GM13976 (cell line): ENCODE measurements at regions of chr17 and their contacts with region 1.

Region 1: GRCh38 chr17:42527273-42527703 is 8.8 kb upstream of the NAGLU start:
- DNase-seq: peak; percentile 79
- CTCF ChIP-seq: peak; percentile 86

Region 2: DNA sequence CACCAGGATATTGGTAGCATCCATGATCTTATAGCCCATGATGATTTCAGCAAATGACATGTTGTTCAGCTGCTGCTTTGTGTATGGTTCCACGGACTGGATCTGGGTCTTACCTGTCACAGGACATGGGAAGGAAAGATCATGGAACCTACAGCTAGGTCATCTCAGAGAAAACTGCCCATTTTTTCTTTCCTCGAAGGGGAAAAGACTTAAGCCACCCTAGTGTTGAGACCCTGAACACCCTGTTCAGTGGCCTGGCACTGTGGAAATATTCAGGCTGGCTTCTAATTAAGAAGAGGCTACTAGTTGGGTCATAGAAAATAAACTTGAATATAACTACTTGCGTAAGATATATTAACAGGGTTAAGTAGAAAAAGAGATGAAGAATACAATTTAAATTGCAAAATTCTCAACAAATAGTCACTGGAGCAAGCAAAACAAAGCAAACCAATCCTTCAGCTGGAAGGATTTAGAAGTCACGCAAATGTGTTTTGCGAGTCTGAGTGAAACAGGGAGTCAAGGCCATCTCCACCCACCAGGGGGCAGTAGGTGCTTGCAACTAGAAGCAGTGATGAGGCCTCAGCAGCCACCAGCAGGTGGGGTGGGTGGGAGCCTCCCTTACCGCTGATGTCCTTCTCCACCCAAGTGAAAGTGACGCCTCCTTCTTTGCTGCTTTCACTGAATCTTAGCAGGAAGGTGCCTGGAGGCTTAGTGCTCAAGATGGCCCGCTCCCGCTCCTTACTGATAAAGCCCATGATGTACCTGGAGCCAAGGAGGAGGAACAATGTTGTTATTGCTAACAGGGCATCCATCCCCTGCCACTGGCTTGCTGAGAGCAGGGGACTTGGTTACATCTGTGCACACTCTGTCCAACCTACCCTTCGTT is 204.7 kb before region 1 on chr17:
- in situ Hi-C with region 1: loop called (anchors 5 kb)
- DNase-seq: peak; percentile 88
- CTCF ChIP-seq: peak; percentile 99

Region 3: DNA sequence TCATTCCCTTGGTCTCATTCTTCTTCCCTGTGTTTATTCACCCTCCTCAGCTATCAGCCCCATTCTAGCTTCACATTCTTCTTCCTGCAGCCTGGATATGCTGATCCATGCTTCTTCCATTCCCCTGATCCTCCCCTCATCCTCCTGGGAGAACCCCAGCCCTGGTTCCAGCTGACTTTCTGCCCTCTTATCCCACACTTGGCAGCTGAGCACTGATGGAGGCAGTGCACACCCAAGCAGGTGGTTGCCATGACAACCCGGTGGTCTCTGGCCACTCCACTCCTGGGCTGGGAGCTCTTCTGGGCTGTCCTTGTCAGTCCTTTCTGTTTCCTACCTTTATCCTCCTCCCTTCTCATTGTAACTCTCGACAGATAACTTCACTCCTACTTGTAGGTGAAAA is 115.0 kb after region 1 on chr17:
- in situ Hi-C with region 1: no loop called
- DNase-seq: no peak
- CTCF ChIP-seq: no peak